ENCODE measurements at regions of chrX and their contacts with region 1.

Region 1: GRCh38 chrX:46744009-46744408 is 14.9 kb downstream of the SLC9A7 start:
- DNase-seq: no peak
- ATAC-seq: no peak
- H3K4me3 ChIP-seq: no peak overlapping the region
- H3K27ac ChIP-seq: no peak overlapping the region
- H3K4me1 ChIP-seq: no peaks in the 10 kb centered on the region; the same call in 1 of the 2 replicates
- H3K27me3 ChIP-seq: no peaks in the 10 kb centered on the region
- CTCF ChIP-seq: no peak
- EP300 ChIP-seq: no peak
- POLR2A ChIP-seq: no peak
- RAD21 ChIP-seq: no peak

Region 2: DNA sequence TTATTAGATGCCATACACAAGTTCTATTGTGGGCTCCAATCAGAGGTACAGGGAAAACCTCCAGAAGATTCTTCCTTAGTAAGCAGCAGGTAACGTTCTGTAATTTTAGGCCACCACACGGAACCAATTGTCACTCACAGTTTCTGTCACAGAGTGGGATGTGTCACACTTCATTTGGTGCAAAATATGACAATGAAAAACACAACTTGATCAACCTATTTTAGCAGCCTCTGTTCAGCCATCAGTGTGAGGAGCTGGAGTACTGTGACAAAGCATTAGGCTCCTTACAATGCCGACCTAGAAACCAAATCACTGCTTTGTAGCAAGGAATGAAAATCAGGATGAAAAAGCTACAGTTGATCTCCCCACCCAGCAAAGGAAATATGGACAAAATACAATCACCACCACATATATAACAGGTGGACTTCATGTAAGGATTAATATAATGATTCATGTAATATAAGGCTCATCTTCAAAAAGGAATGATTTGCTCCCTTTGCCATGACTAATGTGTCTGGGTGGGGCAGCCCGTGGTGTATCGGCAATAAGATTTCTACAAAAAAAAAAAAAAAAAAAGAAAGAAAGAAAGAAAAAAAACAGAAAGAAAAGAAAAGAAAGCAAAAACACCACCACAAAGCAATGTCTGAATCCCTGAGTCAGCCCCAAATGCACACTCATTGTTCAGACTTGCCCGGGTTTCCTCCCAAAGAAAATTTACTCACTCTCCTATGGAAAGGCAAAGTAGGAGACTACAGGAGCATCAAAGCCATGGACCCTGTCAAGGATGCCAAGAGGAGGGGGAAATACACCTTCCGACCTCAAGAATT is 21.1 kb before region 1 on chrX:
- CTCF ChIA-PET with region 1: no interaction called
- POLR2A ChIA-PET with region 1: interaction called, 3 read pairs
- RAD21 ChIA-PET with region 1: no interaction called
- SMC1A ChIA-PET with region 1: interaction called, 11 read pairs
- in situ Hi-C with region 1: no loop called
- intact Hi-C with region 1: no loop called
- DNase-seq: no peak
- ATAC-seq: peak; percentile 64
- H3K4me3 ChIP-seq: peak overlapping the region; percentile 48; the same call in 1 of the 2 replicates
- H3K27ac ChIP-seq: peak overlapping the region; percentile 53
- H3K4me1 ChIP-seq: peaks cover 11% of the 10 kb centered on the region
- H3K27me3 ChIP-seq: no peaks in the 10 kb centered on the region
- CTCF ChIP-seq: no peak
- EP300 ChIP-seq: no peak
- POLR2A ChIP-seq: no peak
- RAD21 ChIP-seq: no peak

Region 3: GRCh38 chrX:46841346-46841745 is 97.3 kb after region 1 on chrX:
- CTCF ChIA-PET with region 1: no interaction called
- POLR2A ChIA-PET with region 1: no interaction called
- RAD21 ChIA-PET with region 1: no interaction called
- SMC1A ChIA-PET with region 1: no interaction called
- in situ Hi-C with region 1: no loop called
- intact Hi-C with region 1: no loop called
- DNase-seq: no peak
- ATAC-seq: peak; percentile 14
- H3K4me3 ChIP-seq: no peak overlapping the region
- H3K27ac ChIP-seq: no peak overlapping the region
- H3K4me1 ChIP-seq: no peaks in the 10 kb centered on the region
- H3K27me3 ChIP-seq: no peaks in the 10 kb centered on the region
- CTCF ChIP-seq: no peak
- EP300 ChIP-seq: no peak
- POLR2A ChIP-seq: no peak
- RAD21 ChIP-seq: no peak